Activated naive CD4-positive, alpha-beta T cell treated with anti-CD3 and anti-CD28 coated beads, Interleukin-2, amount 10 ng/mL, durations not matched to agents 7 days and 5 days (primary cell): ENCODE measurements at regions of chr6 and their contacts with region 1.

Region 1: DNA sequence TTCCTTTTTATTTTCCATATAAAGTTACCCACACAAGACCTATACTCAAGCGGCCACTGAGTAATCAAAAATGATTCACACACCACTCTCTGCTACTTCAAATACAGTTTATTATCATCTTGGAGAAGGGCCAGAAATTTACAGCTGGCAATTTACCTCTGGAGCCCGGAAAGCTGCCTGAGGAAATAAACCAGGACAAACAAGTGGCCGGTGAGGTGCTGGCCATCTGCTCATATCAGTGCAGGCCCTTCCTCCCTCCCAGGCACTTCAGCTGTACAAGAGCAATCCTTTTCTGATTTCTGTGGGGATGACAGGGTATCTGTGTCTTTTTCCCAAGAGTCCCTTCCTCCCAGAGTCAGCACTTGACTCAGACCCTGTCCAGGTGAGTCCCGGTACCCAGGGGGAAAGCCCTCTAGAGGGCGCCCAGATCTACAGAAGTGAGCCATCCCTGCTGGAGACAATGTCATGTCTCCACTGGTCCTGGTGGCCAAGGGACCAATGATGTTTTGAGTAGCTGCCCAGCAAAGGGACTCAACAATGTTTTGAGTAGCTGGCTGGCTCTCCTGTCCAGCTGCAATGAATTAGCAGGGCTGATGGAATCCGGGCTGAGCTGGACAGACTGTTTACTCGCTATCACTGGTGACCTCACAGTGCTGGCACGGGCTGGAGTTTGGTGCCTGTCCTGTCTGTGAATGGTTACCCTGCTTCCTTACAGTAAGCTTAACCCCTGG is 23.6 kb downstream of the LRP11 start:
- DNase-seq: peak; percentile 75
- H3K4me3 Mint-ChIP-seq: no peak overlapping the region
- H3K27ac Mint-ChIP-seq: no peak overlapping the region
- H3K4me1 Mint-ChIP-seq: no peaks in the 10 kb centered on the region
- H3K27me3 Mint-ChIP-seq: peaks cover 18% of the 10 kb centered on the region

Region 2: GRCh38 chr6:149821492-149821891 is 19.0 kb before region 1 on chr6:
- CTCF ChIA-PET with region 1: interaction called, 10 read pairs
- DNase-seq: no peak
- H3K4me3 Mint-ChIP-seq: no peak overlapping the region
- H3K27ac Mint-ChIP-seq: no peak overlapping the region
- H3K4me1 Mint-ChIP-seq: no peaks in the 10 kb centered on the region
- H3K27me3 Mint-ChIP-seq: peaks cover 11% of the 10 kb centered on the region

Region 3: GRCh38 chr6:149851458-149852110 is 11.1 kb after region 1 on chr6:
- CTCF ChIA-PET with region 1: interaction called, 15 read pairs
- DNase-seq: no peak
- H3K4me3 Mint-ChIP-seq: no peak overlapping the region
- H3K27ac Mint-ChIP-seq: no peak overlapping the region
- H3K4me1 Mint-ChIP-seq: peaks cover 40% of the 10 kb centered on the region
- H3K27me3 Mint-ChIP-seq: peaks cover 7% of the 10 kb centered on the region

Region 4: GRCh38 chr6:149863697-149864577 is 23.4 kb after region 1 on chr6 and contains the start of gene LRP11:
- CTCF ChIA-PET with region 1: interaction called, 12 read pairs
- DNase-seq: peak; percentile 85
- H3K4me3 Mint-ChIP-seq: peak within 1 kb of the TSS; percentile 80
- H3K27ac Mint-ChIP-seq: peak within 1 kb of the TSS; percentile 74
- H3K4me1 Mint-ChIP-seq: peaks cover 17% of the 10 kb centered on the region
- H3K27me3 Mint-ChIP-seq: peaks cover 44% of the 10 kb centered on the region

Region 5: GRCh38 chr6:149925974-149926777 is 85.7 kb after region 1 on chr6:
- CTCF ChIA-PET with region 1: interaction called, 20 read pairs
- DNase-seq: peak; percentile 88
- H3K4me3 Mint-ChIP-seq: peak overlapping the region; percentile 32
- H3K27ac Mint-ChIP-seq: no peak overlapping the region
- H3K4me1 Mint-ChIP-seq: peaks cover 33% of the 10 kb centered on the region
- H3K27me3 Mint-ChIP-seq: peaks cover 96% of the 10 kb centered on the region